ENCODE measurements at regions of chr6 and their contacts with region 1.

Region 1: GRCh38 chr6:124573953-124574352 is 388.3 kb upstream of the RNF217 start:
- DNase-seq: no peak
- ATAC-seq: no peak
- H3K4me3 ChIP-seq: no peak overlapping the region
- H3K4me1 ChIP-seq: no peaks in the 10 kb centered on the region
- CTCF ChIP-seq: no peak

Region 2: GRCh38 chr6:124260337-124260736 is 313.6 kb before region 1 on chr6:
- intact Hi-C with region 1: loop called in 1 of 2 experiments (anchors 10 kb)
- DNase-seq: no peak
- ATAC-seq: no peak
- H3K4me3 ChIP-seq: no peak overlapping the region
- H3K4me1 ChIP-seq: no peaks in the 10 kb centered on the region
- CTCF ChIP-seq: no peak

Measured in mucosa of descending colon (tissue), 3 donors.